Caco-2 (cell line): ENCODE measurements at regions of chr12 and their contacts with region 1.

Region 1: GRCh38 chr12:110704748-110705147 is 15.8 kb upstream of the HVCN1 start:
- DNase-seq: peak in 1 of 2 experiments; percentile 58
- H3K4me3 ChIP-seq: no peak overlapping the region
- H3K4me3 Mint-ChIP-seq: no peak overlapping the region
- H3K27ac Mint-ChIP-seq: no peak overlapping the region
- H3K4me1 ChIP-seq: no peaks in the 10 kb centered on the region
- H3K4me1 Mint-ChIP-seq: peaks cover 7% of the 10 kb centered on the region
- H3K27me3 ChIP-seq: no peaks in the 10 kb centered on the region
- H3K27me3 Mint-ChIP-seq: no peaks in the 10 kb centered on the region
- CTCF ChIP-seq: peak; percentile 45 to 70

Region 2: GRCh38 chr12:110826592-110827200 is 121.9 kb after region 1 on chr12:
- CTCF ChIA-PET with region 1: interaction called, 7 read pairs
- POLR2A ChIA-PET with region 1: interaction called, 3 read pairs
- intact Hi-C with region 1: loop called (anchors 1 kb)
- DNase-seq: peak; percentile 72 to 82
- H3K4me3 ChIP-seq: no peak overlapping the region
- H3K4me3 Mint-ChIP-seq: no peak overlapping the region
- H3K27ac Mint-ChIP-seq: no peak overlapping the region
- H3K4me1 ChIP-seq: no peaks in the 10 kb centered on the region
- H3K4me1 Mint-ChIP-seq: no peaks in the 10 kb centered on the region
- H3K27me3 ChIP-seq: no peaks in the 10 kb centered on the region; the same call in 1 of the 2 replicates
- H3K27me3 Mint-ChIP-seq: peaks cover 6% of the 10 kb centered on the region
- CTCF ChIP-seq: peak; percentile 70 to 71

Region 3: DNA sequence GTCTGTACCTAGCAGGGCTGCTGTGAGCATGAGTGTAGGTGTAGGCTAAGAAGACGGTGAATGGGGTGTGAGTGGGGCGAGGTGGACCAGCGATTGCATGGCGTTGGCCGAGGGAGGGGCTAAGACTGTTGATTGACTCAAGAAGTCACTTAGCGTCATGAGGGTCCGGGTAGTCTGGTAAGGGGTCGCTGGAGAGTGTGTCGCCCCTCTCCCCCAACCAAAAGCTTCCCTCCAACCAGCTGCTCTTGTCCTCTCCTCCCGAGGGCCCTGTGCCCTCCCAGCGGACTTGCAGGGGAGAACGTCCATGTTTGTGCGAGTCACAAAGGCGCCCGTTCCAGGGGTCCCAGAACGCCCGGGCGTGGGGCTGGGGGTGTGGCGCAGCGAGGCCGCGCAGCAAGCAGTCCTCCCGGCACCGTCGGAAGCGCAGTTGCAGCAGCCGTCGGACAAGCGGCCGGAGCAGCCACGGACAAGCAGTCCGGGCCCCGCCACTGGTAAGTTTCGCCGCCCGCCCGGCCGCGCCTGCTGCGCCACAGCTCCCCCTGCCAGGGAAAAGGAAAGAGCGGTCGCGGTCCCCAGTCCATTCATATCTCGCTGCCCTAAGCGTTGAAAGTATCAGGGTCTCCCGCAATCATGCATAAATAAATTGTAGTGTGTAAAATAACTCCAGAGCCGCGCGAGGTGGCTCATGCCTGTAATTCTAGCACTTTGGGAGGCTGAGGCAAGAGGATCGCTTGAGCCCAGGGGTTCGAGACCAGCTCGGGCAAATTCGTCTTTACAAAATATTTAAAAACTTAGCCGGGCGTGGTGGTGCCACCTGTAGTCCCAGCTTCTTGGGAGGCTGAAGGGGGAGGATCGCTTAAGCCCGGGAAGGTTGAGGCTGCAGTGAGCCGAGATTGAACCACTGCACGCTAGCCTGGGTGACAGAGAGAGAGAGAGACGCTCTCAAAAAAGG is 142.1 kb after region 1 on chr12 and contains the start of gene CCDC63:
- CTCF ChIA-PET with region 1: interaction called, 11 read pairs
- POLR2A ChIA-PET with region 1: no interaction called
- intact Hi-C with region 1: no loop called
- DNase-seq: peak; percentile 58 to 73
- H3K4me3 ChIP-seq: peak within 1 kb of the TSS; percentile 43
- H3K4me3 Mint-ChIP-seq: peak within 1 kb of the TSS; percentile 67
- H3K27ac Mint-ChIP-seq: no peak within 1 kb of the TSS
- H3K4me1 ChIP-seq: no peaks in the 10 kb centered on the region
- H3K4me1 Mint-ChIP-seq: no peaks in the 10 kb centered on the region
- H3K27me3 ChIP-seq: no peaks in the 10 kb centered on the region
- H3K27me3 Mint-ChIP-seq: peaks cover 15% of the 10 kb centered on the region
- CTCF ChIP-seq: peak; percentile 41 to 75
- total RNA-seq, gene CCDC63: not detected in 2 replicates

Region 4: GRCh38 chr12:110888256-110888991 is 183.7 kb after region 1 on chr12:
- CTCF ChIA-PET with region 1: interaction called, 29 read pairs
- POLR2A ChIA-PET with region 1: no interaction called
- intact Hi-C with region 1: no loop called
- DNase-seq: no peak
- H3K4me3 ChIP-seq: no peak overlapping the region
- H3K4me3 Mint-ChIP-seq: peak overlapping the region; percentile 77
- H3K27ac Mint-ChIP-seq: peak overlapping the region; percentile 64
- H3K4me1 ChIP-seq: no peaks in the 10 kb centered on the region
- H3K4me1 Mint-ChIP-seq: no peaks in the 10 kb centered on the region
- H3K27me3 ChIP-seq: no peaks in the 10 kb centered on the region
- H3K27me3 Mint-ChIP-seq: peaks cover 10% of the 10 kb centered on the region
- CTCF ChIP-seq: no peak